Right lobe of liver (tissue), 6 donors: ENCODE measurements at regions of chr20 and their contacts with region 1.

Region 1: DNA sequence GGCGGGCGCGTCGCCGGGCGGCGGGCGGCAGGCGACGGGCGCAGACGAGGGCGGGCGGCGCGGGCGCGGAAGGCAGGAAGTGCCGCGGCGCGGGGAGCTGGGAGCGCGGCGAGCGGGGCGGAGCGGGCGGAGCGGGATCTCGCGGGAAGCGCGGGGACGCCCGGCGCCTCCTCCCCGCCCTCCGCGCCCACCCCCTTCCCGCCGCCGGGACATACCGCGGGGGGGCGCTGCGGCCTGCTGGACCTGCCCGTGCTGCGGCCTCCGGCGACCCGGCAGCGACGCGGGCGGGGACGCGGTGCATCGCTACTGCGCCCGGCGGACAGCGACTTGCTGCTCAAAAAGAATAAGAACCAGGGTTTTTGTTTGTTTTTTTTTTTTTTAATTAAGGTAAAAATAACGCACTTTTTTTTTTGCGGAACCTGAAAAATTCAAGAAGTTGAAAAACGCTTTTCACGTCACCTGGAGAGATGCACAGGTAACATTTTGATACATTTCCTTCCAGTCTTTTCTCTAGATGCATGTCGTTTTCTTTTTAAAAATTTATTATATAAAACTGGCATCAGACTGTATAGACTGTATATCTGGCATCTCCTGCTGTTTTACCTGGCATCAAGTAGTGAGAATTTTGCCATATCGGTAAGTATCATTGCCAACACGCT is at the start of gene CENPB:
- DNase-seq: peak; percentile 90 to 92 (median 91)
- ATAC-seq: peak; percentile 94 to 99 (median 97)
- H3K4me3 ChIP-seq: peak within 1 kb of the TSS; percentile 42 to 70 (median 58)
- H3K27ac ChIP-seq: peak within 1 kb of the TSS; percentile 26 to 73 (median 49)
- H3K4me1 ChIP-seq: peaks cover 0 to 14% (median 6%) of the 10 kb centered on the region in 4 donors
- H3K27me3 ChIP-seq: no peaks in the 10 kb centered on the region
- CTCF ChIP-seq: peak; percentile 61 to 97 (median 84)
- POLR2A ChIP-seq: no peak
- total RNA-seq, gene CENPB: 27.8 to 43.1 (median 31.6) TPM

Region 2: DNA sequence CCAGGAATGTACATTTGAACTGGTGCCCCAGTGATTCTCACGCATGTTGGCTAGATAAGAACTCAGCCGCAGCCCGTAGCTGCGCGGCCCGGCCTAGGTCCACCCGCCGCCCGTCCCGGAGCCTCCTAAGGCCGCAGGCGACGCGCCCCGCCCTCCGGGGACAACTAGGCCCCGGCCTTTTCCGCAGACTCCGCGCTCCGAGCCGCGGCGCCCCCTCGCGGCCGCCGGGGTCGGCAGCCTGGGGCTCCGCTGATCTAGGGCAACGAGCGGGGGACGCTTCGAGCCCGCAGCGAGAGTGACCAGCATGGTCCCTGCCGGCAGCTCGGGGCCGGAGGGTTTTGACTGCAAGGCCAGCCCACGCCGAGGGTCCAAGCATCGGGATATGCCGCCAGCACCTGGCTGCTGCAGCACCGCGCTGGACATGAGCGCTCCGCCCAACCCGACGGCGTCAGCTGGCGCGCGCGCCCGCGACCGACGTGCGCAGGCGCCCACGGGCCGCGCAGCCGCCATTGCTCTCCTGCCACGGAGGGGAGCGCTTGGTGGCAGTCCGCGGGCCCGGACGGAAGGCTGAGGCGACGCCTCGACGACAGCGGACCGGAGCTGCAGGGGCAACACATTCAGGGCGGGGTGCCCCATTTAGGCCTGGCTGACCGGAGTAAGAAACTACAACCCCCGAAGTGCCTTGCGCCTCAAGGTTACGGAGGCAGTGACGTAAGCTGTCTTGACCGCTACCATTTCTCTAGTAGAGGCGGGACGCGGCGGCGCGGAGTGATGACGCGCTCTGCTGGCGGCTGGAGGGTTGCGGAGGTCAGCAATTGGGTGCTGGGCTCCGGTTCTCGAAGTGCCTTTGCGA is 33.5 kb after region 1 on chr20 and contains the start of gene AP5S1:
- intact Hi-C with region 1: loop called (anchors 5 kb)
- DNase-seq: peak; percentile 98
- ATAC-seq: peak; percentile 80 to 91 (median 86)
- H3K4me3 ChIP-seq: peak within 1 kb of the TSS; percentile 63 to 81 (median 64)
- H3K27ac ChIP-seq: peak within 1 kb of the TSS; percentile 97 to 100 (median 99)
- H3K4me1 ChIP-seq: peaks cover 0 to 9% (median 7%) of the 10 kb centered on the region in 4 donors
- H3K27me3 ChIP-seq: no peaks in the 10 kb centered on the region
- CTCF ChIP-seq: peak; percentile 99 to 100 (median 100)
- POLR2A ChIP-seq: peak; percentile 68
- total RNA-seq, gene AP5S1: 7.7 to 16.1 (median 9.5) TPM